Activated B cell treated with CpG ODN at 0.5 μM for 24 hours (primary cell): ENCODE measurements at regions of chr11 and their contacts with region 1.

Region 1: DNA sequence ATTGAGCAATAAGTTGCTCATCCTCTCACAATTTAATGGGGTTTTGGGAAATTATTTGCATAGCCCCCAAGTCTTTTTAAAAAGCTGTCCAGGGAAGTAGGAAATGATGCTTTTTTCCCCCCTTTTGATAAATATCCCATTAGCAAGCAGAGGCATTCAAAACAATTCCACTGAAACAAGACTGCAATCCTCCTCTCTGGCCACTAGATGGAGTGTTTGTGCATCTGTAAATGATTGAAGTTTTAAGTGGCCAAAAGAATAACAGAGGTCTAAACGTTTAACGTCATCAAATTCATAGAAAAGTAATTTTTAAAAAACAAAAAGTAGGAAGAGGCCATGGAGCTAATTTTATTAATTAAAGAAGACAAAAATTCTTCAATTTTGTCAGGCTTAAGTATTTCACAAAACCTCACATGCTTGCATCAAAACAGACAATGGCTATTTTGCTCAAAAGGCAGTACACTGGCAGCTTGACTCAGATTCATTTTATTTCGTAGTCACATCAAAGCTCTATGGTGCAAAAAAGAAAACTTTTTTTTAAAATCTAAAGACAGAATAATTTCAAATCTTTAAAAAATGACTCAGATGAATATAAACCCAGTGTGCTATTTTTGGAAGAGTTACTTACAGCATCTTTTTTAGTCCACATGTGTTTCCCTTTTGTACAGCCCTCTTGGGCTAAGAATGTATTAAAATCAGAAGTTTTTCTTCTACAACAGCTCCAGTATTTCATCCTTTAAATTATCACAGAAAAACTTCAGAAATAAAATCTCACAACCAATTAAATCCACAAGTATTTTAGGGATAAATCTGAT is 17.8 kb downstream of the CHORDC1 start:
- DNase-seq: no peak
- ATAC-seq: peak; percentile 71
- H3K4me3 Mint-ChIP-seq: no peak overlapping the region
- H3K27ac Mint-ChIP-seq: no peak overlapping the region
- H3K4me1 Mint-ChIP-seq: no peaks in the 10 kb centered on the region
- H3K27me3 Mint-ChIP-seq: no peaks in the 10 kb centered on the region
- CTCF ChIP-seq: no peak

Region 2: DNA sequence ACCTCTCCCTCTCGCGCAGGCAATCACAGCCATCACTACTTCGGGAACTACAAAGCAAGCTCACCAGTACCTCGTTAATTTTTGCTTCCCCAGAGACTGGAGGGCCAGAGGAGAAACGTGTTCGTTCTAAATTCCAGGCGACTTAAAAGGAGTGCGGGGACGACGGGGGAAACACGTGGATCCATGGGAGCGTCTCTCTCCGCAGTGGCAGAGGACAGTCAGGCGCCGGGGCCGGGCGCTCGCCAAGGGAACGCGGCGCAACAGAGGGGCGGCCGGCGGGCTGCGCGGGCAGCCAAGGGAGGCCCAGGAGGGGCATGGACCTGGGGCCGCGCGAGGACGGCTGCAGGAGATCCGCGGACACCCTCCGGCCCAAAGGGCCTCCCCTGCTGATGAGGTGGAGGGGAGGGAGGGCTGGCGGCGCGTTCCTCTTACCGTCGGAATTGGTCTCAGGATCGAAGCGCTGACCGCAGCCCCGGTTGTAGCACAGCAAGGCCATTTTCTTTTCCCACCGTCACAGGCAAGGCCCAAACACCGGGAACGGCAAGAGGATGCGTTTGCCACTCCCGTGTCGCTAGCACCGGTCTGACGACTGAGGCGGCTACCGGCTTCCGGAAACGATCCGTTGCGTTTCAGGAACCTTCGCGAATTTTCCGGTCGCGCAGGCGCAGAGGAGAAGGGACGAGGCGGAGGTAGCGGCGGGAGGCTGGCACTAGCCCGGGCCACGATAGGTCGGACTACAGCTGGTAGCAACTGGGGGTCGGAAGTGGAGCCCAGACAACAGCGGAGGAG is 17.6 kb after region 1 on chr11 and contains the start of gene CHORDC1:
- CTCF ChIA-PET with region 1: interaction called, 6 read pairs
- POLR2A ChIA-PET with region 1: no interaction called
- intact Hi-C with region 1: loop called (anchors 1 kb)
- DNase-seq: peak; percentile 93
- ATAC-seq: peak; percentile 92
- H3K4me3 Mint-ChIP-seq: peak within 1 kb of the TSS; percentile 97
- H3K27ac Mint-ChIP-seq: peak within 1 kb of the TSS; percentile 91
- H3K4me1 Mint-ChIP-seq: peaks cover 48% of the 10 kb centered on the region
- H3K27me3 Mint-ChIP-seq: no peaks in the 10 kb centered on the region
- CTCF ChIP-seq: no peak
- total RNA-seq, gene CHORDC1: 61.2 and 63.4 TPM in 2 replicates

Region 3: DNA sequence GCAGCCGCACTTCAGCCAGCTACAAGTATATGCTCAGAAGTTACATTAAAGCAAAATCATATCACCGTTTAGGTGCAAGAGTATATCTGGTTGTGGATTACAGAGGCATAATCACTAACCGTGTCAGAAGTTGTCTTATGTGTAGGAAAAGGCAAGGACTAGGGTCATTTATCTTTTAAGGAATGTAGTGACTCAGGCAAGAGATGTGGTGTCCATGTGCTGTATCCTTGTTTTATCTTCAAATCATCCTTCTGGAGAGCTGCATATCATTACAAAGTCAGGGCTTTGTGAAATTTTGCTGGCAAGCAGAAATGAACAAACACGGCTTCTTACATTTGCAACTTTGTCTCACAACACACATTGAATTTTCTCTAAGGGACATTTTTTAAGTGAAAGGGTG is 30.5 kb after region 1 on chr11:
- CTCF ChIA-PET with region 1: no interaction called
- POLR2A ChIA-PET with region 1: no interaction called
- intact Hi-C with region 1: no loop called
- DNase-seq: no peak
- ATAC-seq: no peak
- H3K4me3 Mint-ChIP-seq: no peak overlapping the region
- H3K27ac Mint-ChIP-seq: no peak overlapping the region
- H3K4me1 Mint-ChIP-seq: no peaks in the 10 kb centered on the region
- H3K27me3 Mint-ChIP-seq: peaks cover 14% of the 10 kb centered on the region
- CTCF ChIP-seq: no peak

Region 4: DNA sequence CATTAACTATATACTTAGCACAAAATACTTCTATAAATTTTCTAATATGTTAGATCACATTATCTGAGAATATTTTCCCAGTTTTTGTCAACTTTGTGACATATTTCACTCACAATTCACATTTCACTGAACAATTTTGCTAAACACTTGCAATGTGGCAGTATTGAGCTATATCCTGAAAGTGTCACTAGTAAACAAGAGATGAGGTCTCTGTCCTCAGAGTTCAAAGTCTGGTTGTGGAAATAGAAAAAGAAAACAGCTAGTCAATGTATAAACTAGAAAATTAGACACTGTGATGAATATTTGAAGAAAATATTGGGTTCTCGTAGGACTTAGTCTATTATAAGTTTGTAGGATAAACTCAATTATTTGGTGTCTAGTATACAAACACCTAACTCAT is 105.2 kb after region 1 on chr11:
- CTCF ChIA-PET with region 1: no interaction called
- POLR2A ChIA-PET with region 1: no interaction called
- intact Hi-C with region 1: no loop called
- DNase-seq: no peak
- ATAC-seq: no peak
- H3K4me3 Mint-ChIP-seq: no peak overlapping the region
- H3K27ac Mint-ChIP-seq: no peak overlapping the region
- H3K4me1 Mint-ChIP-seq: no peaks in the 10 kb centered on the region
- H3K27me3 Mint-ChIP-seq: no peaks in the 10 kb centered on the region
- CTCF ChIP-seq: no peak

Region 5: GRCh38 chr11:90391756-90392155 is 186.7 kb after region 1 on chr11:
- CTCF ChIA-PET with region 1: no interaction called
- POLR2A ChIA-PET with region 1: no interaction called
- intact Hi-C with region 1: no loop called
- DNase-seq: no peak
- ATAC-seq: no peak
- H3K4me3 Mint-ChIP-seq: no peak overlapping the region
- H3K27ac Mint-ChIP-seq: no peak overlapping the region
- H3K4me1 Mint-ChIP-seq: no peaks in the 10 kb centered on the region
- H3K27me3 Mint-ChIP-seq: no peaks in the 10 kb centered on the region
- CTCF ChIP-seq: no peak